B cell (primary cell): ENCODE measurements at regions of chr16 and their contacts with region 1.

Region 1: GRCh38 chr16:67480833-67481560 is at the start of gene ATP6V0D1:
- DNase-seq: peak; percentile 100
- ATAC-seq: peak; percentile 85
- H3K4me3 ChIP-seq: peak within 1 kb of the TSS; percentile 67 to 100 (median 99)
- H3K4me3 Mint-ChIP-seq: peak within 1 kb of the TSS; percentile 99
- H3K27ac ChIP-seq: peak within 1 kb of the TSS; percentile 99 to 100
- H3K27ac Mint-ChIP-seq: peak within 1 kb of the TSS; percentile 98
- H3K4me1 ChIP-seq: peaks cover 38 to 52% of the 10 kb centered on the region in 2 donors
- H3K4me1 Mint-ChIP-seq: peaks cover 63% of the 10 kb centered on the region
- H3K27me3 ChIP-seq: no peaks in the 10 kb centered on the region
- H3K27me3 Mint-ChIP-seq: no peaks in the 10 kb centered on the region
- CTCF ChIP-seq: peak; percentile 79
- total RNA-seq, gene ATP6V0D1: 59.7 and 62.1 TPM in 2 replicates

Region 2: GRCh38 chr16:67461600-67462592 is 19.1 kb before region 1 on chr16:
- CTCF ChIA-PET with region 1: interaction called, 11 read pairs
- POLR2A ChIA-PET with region 1: interaction called, 5 read pairs
- intact Hi-C with region 1: no loop called
- DNase-seq: no peak
- ATAC-seq: no peak
- H3K4me3 ChIP-seq: no peak overlapping the region
- H3K4me3 Mint-ChIP-seq: no peak overlapping the region
- H3K27ac ChIP-seq: no peak overlapping the region
- H3K27ac Mint-ChIP-seq: no peak overlapping the region
- H3K4me1 ChIP-seq: peaks cover 7 to 23% of the 10 kb centered on the region in 2 donors
- H3K4me1 Mint-ChIP-seq: peaks cover 31% of the 10 kb centered on the region
- H3K27me3 ChIP-seq: no peaks in the 10 kb centered on the region
- H3K27me3 Mint-ChIP-seq: no peaks in the 10 kb centered on the region
- CTCF ChIP-seq: no peak

Region 3: DNA sequence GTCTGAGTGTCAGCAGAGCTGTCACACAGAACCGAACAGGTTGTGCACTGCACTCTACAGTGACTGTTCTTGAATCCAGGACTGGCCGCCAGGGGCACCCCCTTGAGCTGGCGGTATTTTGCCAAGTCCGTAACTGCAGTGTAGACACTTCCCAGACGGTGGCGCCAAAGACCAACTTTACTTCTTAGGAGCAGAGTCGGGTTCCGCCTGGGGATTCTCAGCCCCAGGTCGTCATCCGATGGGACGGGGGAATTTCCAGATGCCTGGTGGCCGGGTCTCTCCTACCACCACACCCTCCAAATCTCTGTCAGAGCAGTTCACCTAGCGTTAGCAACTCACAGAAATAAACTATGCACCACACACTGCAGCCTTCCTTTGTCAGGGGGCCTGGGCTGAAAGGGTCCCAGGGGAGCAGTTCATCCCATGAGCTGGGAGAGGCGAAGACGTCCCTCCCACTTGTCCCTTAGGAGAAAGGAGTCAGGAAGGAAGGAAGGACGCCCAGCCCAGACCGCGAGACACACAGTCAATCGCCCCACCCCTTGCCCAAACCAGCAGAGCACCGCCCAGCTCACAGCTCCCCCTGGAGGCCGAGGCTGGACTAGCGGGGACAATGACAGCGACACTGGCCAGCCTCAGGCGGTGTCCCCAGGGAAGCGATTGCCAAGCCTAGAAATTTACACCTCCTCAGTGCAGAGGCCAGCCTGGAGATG is 40.3 kb after region 1 on chr16:
- CTCF ChIA-PET with region 1: interaction called, 817 read pairs
- POLR2A ChIA-PET with region 1: interaction called, 19 read pairs
- intact Hi-C with region 1: loop called (anchors 1 kb)
- DNase-seq: peak; percentile 99
- ATAC-seq: peak; percentile 71
- H3K4me3 ChIP-seq: peak overlapping the region; percentile 47 to 74 (median 61)
- H3K4me3 Mint-ChIP-seq: peak overlapping the region; percentile 94
- H3K27ac ChIP-seq: peak overlapping the region; percentile 96 to 97
- H3K27ac Mint-ChIP-seq: peak overlapping the region; percentile 99
- H3K4me1 ChIP-seq: peaks cover 44 to 69% of the 10 kb centered on the region in 2 donors
- H3K4me1 Mint-ChIP-seq: peaks cover 77% of the 10 kb centered on the region
- H3K27me3 ChIP-seq: no peaks in the 10 kb centered on the region
- H3K27me3 Mint-ChIP-seq: no peaks in the 10 kb centered on the region
- CTCF ChIP-seq: peak; percentile 87

Region 4: GRCh38 chr16:67546761-67547422 is 65.9 kb after region 1 on chr16:
- CTCF ChIA-PET with region 1: interaction called, 30 read pairs
- POLR2A ChIA-PET with region 1: interaction called, 8 read pairs
- intact Hi-C with region 1: no loop called
- DNase-seq: peak; percentile 87
- ATAC-seq: peak; percentile 12
- H3K4me3 ChIP-seq: peak overlapping the region in 4 of 5 experiments; percentile 26 to 41 (median 39)
- H3K4me3 Mint-ChIP-seq: peak overlapping the region; percentile 85
- H3K27ac ChIP-seq: peak overlapping the region; percentile 91 to 95
- H3K27ac Mint-ChIP-seq: peak overlapping the region; percentile 98
- H3K4me1 ChIP-seq: peaks cover 83 to 94% of the 10 kb centered on the region in 2 donors
- H3K4me1 Mint-ChIP-seq: peaks cover 85% of the 10 kb centered on the region
- H3K27me3 ChIP-seq: no peaks in the 10 kb centered on the region
- H3K27me3 Mint-ChIP-seq: no peaks in the 10 kb centered on the region
- CTCF ChIP-seq: peak; percentile 100

Region 5: GRCh38 chr16:67595033-67595355 is 114.0 kb after region 1 on chr16:
- CTCF ChIA-PET with region 1: no interaction called
- POLR2A ChIA-PET with region 1: no interaction called
- intact Hi-C with region 1: no loop called
- DNase-seq: no peak
- ATAC-seq: no peak
- H3K4me3 ChIP-seq: no peak overlapping the region
- H3K4me3 Mint-ChIP-seq: no peak overlapping the region
- H3K27ac ChIP-seq: peak overlapping the region in 1 of 2 donors; percentile 12
- H3K27ac Mint-ChIP-seq: no peak overlapping the region
- H3K4me1 ChIP-seq: no peaks in the 10 kb centered on the region
- H3K4me1 Mint-ChIP-seq: peaks cover 27% of the 10 kb centered on the region
- H3K27me3 ChIP-seq: no peaks in the 10 kb centered on the region
- H3K27me3 Mint-ChIP-seq: no peaks in the 10 kb centered on the region
- CTCF ChIP-seq: no peak

Region 6: GRCh38 chr16:67660564-67661028 is 179.6 kb after region 1 on chr16 and contains the start of gene PARD6A:
- CTCF ChIA-PET with region 1: interaction called, 42 read pairs
- POLR2A ChIA-PET with region 1: no interaction called
- intact Hi-C with region 1: loop called (anchors 1 kb)
- DNase-seq: peak; percentile 99
- ATAC-seq: peak; percentile 83
- H3K4me3 ChIP-seq: peak within 1 kb of the TSS; percentile 80 to 99 (median 95)
- H3K4me3 Mint-ChIP-seq: peak within 1 kb of the TSS; percentile 97
- H3K27ac ChIP-seq: peak within 1 kb of the TSS; percentile 88 to 93
- H3K27ac Mint-ChIP-seq: peak within 1 kb of the TSS; percentile 97
- H3K4me1 ChIP-seq: peaks cover 14 to 24% of the 10 kb centered on the region in 2 donors
- H3K4me1 Mint-ChIP-seq: peaks cover 35% of the 10 kb centered on the region
- H3K27me3 ChIP-seq: no peaks in the 10 kb centered on the region
- H3K27me3 Mint-ChIP-seq: no peaks in the 10 kb centered on the region
- CTCF ChIP-seq: no peak
- total RNA-seq, gene PARD6A: 13.6 and 14.8 TPM in 2 replicates

Region 7: DNA sequence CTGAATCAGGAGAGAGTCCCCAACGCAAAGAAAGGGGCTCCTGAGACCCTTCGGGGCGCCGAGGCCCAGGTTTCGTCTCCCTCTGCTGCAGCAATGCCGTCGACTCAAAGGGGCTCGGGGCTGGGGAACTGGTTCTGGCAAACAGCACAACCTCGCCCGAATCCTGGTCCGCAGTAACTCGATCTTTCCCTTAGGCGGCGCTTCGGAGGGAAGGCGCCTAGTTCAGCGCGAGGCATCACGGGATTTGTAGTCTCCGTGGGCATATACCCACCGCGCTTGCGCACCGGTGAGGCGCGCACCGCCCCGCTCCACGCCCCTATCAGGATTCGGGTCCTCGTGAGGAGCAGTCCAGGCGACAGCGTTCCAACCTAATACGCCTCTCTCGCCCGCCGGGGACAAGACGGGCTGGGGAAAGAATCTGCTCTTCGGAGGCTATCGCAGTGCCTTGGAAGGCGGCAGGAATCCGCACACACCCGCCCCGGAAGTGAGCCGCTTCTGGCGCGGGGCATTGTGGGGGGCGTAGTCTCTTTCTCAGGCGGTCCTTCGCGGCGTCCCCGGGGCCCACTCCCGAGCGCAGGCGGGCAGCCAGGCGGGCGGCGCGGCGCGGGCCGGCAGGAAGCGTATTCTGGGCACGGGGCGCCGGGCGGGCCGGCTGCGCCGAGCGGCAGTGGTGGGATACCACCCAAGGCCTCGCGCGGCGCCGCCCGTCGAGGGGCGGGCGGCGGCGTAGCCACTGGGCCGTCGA is 360.9 kb after region 1 on chr16 and contains the start of gene THAP11:
- CTCF ChIA-PET with region 1: interaction called, 3 read pairs
- POLR2A ChIA-PET with region 1: no interaction called
- intact Hi-C with region 1: loop called (anchors 1 kb)
- DNase-seq: peak; percentile 98
- ATAC-seq: peak; percentile 58
- H3K4me3 ChIP-seq: peak within 1 kb of the TSS; percentile 74 to 98 (median 89)
- H3K4me3 Mint-ChIP-seq: peak within 1 kb of the TSS; percentile 96
- H3K27ac ChIP-seq: peak within 1 kb of the TSS; percentile 87 to 96
- H3K27ac Mint-ChIP-seq: peak within 1 kb of the TSS; percentile 98
- H3K4me1 ChIP-seq: peaks cover 31 to 42% of the 10 kb centered on the region in 2 donors
- H3K4me1 Mint-ChIP-seq: peaks cover 36% of the 10 kb centered on the region
- H3K27me3 ChIP-seq: no peaks in the 10 kb centered on the region
- H3K27me3 Mint-ChIP-seq: no peaks in the 10 kb centered on the region
- CTCF ChIP-seq: peak; percentile 83
- total RNA-seq, gene THAP11: 42.7 and 44.0 TPM in 2 replicates